Psoas muscle (tissue), 8 donors: ENCODE measurements at regions of chr20 and their contacts with region 1.

Region 1: DNA sequence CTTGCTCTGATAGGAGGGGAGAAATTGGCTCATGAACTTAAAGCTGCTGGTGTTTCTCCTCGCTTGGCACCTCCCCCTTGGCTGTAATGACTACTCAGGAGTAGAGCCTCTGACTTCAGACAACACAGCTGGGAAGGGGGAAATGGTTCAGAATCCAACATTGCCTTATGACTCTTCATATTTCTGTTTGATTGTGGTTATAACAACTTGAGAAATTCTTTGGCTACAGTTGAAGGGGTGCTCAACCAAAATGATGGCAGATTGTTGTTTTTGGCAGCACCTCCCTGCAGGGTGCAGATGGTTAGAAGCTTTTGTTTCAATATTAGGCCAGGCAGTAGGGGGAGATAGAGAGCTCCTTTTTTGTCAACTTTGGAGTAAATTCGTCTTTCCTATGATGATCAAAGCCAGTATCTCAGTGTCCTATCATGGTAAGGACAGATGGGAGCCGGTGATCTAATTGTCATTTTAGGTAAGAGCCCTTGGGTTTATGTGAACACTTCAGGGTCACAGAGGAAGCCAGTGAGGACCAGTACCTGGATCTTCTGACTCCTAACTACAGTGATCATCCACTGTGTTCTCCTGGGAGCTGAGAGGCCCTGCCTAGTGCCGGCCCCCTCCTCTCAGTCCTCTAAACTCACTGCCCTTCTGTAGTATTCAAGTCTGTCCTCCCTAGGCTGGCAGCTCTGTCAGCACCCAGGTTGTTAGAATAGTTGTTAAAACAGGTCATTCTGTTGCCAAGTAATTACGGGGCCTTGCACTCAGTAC is 39.9 kb downstream of the RPRD1B start:
- DNase-seq: peak in 1 of 2 donors; percentile 58
- ATAC-seq: peak; percentile 55 to 68 (median 64)
- H3K4me3 ChIP-seq: no peak overlapping the region
- H3K27ac ChIP-seq: peak overlapping the region; percentile 80
- H3K4me1 ChIP-seq: peaks cover 40% of the 10 kb centered on the region
- H3K27me3 ChIP-seq: no peaks in the 10 kb centered on the region
- CTCF ChIP-seq: peak; percentile 60

Region 2: GRCh38 chr20:37640600-37641561 is 432.6 kb before region 1 on chr20:
- intact Hi-C with region 1: no loop called
- DNase-seq: no peak
- ATAC-seq: peak in 2 of 4 donors; percentile 14 to 30
- H3K4me3 ChIP-seq: no peak overlapping the region
- H3K27ac ChIP-seq: no peak overlapping the region
- H3K4me1 ChIP-seq: no peaks in the 10 kb centered on the region
- H3K27me3 ChIP-seq: peaks cover 0 to 22% (median 0%) of the 10 kb centered on the region in 3 donors
- CTCF ChIP-seq: no peak

Region 3: DNA sequence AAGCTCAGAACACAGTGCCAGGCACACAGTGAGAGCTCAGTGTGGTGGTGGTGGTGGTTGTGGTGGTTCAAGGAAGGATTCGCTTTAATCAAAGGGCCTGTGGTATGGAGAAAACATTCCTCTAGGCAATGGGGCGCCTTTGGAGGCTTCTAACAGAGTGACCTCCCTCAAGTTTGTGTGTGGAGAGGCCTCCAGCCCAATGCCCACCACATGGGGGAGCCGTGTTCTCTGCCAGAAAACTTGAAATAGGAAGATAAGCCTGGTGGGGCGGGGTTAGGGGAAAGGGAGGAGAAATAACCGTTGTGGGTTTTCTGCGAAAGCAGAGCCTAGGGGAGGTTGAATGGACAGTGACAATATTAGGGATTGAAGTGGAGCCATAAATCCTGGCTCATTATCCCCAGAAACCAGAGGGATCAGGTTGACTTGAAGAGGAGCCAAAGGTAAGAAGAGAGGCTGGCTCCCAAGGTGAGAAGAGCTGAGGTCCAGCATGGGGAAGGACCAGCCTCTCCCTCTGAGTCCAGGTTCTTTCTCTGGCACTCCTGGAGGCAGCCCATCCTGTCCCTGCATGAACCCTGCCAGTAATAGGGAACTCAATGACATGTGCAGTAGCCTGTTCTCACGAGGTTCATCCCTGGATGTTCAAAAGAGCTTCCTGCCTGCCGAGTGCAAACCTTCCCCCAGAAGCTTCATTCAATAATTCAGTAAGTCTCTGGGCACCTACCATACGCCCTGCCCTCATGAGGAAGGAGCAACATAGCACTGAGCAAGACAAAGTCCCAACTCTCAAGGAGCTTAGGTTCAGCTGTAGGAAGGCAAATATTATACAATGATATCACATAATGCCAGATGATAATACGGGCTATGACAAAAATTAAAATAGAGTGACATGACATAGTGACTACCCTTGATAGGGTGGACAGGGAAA is 40.2 kb after region 1 on chr20:
- intact Hi-C with region 1: loop called in 1 of 2 experiments (anchors 2 kb)
- DNase-seq: no peak
- ATAC-seq: peak; percentile 17 to 60 (median 26)
- H3K4me3 ChIP-seq: no peak overlapping the region
- H3K27ac ChIP-seq: peak overlapping the region; percentile 58
- H3K4me1 ChIP-seq: peaks cover 60% of the 10 kb centered on the region
- H3K27me3 ChIP-seq: no peaks in the 10 kb centered on the region
- CTCF ChIP-seq: no peak

Region 4: DNA sequence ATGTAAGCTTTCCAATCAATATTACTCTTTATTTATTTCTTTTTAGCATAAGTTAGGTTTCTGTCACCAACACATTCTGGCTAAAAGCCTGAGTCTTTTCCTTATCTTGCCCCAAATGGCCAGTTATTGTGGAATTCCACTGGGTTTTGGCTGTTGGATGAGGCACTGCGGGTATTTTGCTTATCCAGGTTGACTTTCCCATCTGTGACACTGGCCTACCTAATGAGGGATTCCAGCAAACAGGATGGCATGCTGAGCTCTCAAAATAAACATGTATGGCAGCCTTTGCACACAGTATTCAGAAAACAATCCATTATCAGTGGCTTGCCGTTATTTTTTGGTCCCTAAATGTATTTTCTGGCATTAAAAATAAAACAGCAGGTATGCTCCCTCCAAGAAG is 392.7 kb after region 1 on chr20:
- intact Hi-C with region 1: no loop called
- DNase-seq: no peak
- ATAC-seq: no peak
- H3K4me3 ChIP-seq: no peak overlapping the region
- H3K27ac ChIP-seq: no peak overlapping the region
- H3K4me1 ChIP-seq: no peaks in the 10 kb centered on the region
- H3K27me3 ChIP-seq: no peaks in the 10 kb centered on the region
- CTCF ChIP-seq: no peak